Cardiac septum (tissue), 1 donor: ENCODE measurements at regions of chr14 and their contacts with region 1.

Region 1: DNA sequence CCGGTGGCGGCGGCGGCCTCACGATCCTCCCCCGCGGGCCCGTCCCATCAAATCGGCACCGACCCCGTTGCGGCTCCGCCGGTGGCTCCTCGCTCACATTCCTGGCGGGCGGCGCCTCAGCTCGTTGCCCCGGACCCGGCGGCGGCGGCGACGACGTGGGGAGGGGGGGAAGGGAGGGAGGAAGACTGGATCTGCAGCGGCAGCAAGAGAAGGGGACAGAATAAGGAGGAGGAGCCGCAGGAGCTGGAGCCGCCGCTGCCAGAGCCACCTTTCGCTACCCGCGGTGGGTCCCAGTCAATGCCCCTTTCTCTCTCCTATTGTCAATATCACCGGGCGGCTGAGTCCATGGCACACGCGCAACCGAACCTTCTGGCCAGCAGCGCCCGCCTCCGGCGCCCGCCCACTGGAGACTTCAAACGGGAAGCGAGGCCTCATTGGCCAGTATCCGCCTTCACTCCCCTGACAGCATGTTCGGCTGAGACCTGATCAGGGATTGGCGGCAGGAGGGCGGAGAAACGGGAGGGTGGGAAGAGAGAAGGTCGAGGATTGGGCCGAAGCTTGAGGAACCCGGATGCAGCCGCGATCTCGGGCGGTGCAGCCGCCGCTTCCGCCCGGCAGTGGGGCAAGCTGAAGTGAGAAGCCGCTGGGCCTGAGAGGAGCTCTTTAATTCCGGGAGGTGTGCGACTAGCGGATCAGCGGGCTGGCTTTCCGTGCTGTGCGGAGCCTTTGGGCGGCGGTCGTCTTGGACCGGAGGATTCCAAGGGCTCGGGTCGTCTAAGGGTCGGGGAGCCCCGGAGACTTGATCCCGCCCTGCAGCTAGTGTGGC is at the start of gene PPP2R5E:
- DNase-seq: peak; percentile 99
- total RNA-seq, gene PPP2R5E: 40.3 TPM

Region 2: GRCh38 chr14:63388763-63389431 is 154.3 kb before region 1 on chr14:
- intact Hi-C with region 1: loop called (anchors 2 kb)
- DNase-seq: no peak

Region 3: DNA sequence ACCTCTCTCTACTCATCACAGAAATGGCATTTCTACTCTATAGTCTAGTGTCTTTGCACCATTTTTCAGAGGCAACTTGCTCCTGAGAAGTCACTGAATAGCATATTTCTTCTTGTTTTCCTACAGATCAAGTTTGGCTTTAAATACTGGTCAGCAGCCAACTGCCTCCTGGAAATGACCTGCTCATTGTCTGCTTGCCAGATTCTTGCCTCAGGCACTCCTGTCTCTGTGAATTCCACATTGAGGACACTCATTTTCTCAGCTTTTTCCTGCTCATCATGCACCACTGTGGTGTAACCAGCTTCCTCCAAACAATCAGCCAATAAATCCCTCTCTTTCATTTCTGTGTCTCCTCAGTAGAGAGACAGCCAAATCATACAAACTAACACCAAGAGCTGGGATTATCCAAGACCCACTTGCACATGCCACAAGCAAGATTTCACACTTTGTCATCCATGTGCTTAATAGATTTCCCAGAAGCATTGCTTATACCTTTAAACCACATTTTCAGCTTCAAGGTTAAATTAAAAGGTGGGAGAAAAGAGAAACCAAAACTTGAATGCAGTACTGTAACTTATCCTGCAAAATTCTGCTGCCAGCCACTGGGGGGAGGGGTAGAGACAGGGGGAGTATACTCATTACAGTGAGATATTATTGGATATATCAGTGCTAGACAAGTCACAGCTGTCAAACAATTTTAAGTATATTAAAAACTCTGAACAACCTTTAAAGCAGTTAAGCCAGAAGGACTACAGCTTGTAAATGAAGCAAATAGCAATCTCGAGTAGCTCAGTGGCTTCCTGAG is 105.1 kb before region 1 on chr14:
- intact Hi-C with region 1: loop called (anchors 5 kb)
- DNase-seq: no peak

Region 4: DNA sequence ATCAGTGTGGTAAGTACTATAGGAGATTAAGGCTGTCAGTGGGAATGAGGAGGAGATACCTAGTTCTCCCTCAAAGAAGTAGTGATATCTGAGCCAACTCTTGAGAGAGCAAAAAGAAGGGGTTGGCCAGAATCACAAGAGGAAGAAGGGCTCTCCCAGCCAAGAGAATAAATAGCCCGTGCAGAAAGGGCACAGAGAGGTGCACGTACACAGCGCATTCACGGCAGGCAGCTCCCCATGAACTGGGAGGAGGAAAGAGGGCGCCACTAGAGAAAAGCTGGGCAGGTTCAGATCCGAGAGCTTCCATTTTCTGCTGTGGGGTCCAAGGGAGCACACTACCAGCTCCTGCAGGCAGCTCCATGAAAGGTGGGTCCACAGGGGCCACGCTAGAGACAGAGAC is 59.9 kb before region 1 on chr14:
- intact Hi-C with region 1: no loop called
- DNase-seq: no peak

Region 5: DNA sequence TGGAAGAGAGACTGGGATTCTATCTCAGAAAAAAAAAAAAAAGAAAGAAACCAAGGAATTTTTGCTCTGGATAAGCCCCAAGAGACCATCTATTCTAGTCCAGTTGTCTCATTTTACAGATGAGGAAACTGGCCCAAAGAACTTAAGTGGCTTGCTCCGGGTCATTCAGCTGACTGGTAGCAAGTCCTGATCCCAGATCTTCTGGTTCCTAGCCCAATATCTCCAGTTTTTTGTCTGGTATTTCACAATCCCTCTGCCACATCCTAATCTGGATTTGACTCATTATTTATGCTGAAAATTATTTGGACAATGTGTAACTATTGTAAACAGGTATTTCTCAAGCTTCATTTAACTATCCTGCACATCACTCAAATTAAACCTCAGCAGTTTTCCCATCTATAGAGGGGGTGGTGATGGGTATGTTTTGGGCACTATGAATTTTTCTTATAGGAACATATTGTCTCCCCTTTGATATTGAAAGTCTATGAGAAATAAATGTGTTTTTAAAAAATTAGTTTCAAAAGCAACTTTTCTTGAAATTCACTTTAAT is 43.4 kb before region 1 on chr14:
- intact Hi-C with region 1: loop called (anchors 5 kb)
- DNase-seq: no peak

Region 6: DNA sequence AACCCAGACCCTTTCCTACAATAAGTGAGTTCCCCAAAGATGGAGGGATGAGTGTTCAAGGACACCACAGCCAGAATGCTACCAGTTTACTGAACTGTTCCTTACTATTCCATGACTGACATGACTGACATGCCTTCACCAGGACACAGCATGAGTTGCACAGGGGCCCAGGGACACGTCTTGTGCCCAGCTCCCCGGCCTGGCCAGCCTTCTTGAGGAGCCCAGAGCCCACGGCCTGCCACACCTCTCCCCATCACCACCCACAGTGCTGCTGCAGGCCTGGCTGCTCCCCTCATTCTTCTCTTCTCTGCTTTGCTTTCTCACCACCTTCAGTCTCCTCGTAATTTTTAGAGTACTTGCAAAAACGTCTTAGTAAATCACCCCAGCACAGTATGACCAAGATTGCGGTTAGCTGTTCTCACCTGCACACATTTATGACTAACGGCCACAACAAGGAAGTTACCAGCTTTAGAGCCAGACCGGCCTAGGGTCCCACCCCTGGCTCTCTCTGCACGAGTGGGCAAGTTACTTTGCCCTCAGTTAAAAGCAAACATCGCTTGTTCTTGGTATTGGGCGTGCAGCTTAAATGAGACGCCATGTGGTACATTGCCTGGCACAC is 18.6 kb before region 1 on chr14:
- intact Hi-C with region 1: loop called (anchors 1 kb)
- DNase-seq: no peak

Region 7: DNA sequence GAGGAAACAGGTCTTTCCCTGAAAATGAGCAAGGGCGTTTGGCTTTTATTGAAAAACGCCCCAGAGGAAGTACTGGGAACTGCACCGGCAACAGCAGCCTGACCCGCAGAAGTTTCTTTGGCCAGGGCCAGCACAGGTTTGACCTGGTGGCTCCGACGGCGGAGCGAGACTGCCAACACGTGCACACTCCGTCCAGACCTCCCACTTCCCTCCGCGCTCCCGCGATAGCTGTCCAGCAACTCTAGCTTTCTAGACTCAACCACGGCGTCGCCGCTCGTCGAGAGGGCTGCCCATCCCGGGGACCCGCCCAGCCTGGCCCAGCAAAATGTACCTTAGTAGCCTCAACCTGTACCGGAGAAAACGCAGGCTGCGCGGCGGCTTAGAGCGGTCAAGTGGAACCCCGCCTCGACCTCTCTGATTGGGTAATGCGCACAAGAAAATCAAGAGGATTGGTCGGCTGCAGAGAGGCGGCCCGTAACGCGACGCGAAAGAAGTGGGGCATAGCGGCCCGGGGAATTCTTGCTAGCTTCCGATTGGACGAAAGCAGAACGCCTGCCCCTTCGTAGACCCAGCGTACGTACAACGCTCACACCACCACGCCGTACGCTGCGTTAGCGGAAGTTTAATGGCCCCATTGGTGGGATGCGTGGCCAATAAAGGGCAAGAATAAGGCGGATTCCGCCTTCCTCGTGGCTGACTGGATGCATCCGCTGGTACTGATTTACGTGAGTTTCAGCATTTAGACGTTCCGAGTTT is 98.4 kb after region 1 on chr14 and contains the start of gene WDR89:
- intact Hi-C with region 1: loop called (anchors 5 kb)
- DNase-seq: peak; percentile 98
- total RNA-seq, gene WDR89: 6.9 TPM